ENCODE measurements at regions of chr9 and their contacts with region 1.

Region 1: GRCh38 chr9:136885950-136886578 is at the start of gene TRAF2:
- DNase-seq: peak; percentile 94
- ATAC-seq: peak; percentile 85
- H3K4me3 ChIP-seq: peak within 1 kb of the TSS; percentile 81 to 92 (median 85)
- H3K27ac ChIP-seq: peak within 1 kb of the TSS; percentile 74
- H3K4me1 ChIP-seq: peaks cover 57% of the 10 kb centered on the region
- H3K27me3 ChIP-seq: no peaks in the 10 kb centered on the region
- CTCF ChIP-seq: peak; percentile 26; the same call in 1 of the 2 replicates
- EP300 ChIP-seq: no peak
- POLR2A ChIP-seq: peak in 1 of 2 experiments; percentile 91; a peak in 2 of 4 replicates
- RAD21 ChIP-seq: peak; percentile 60
- total RNA-seq, gene TRAF2: 13.4 and 13.6 TPM in 2 replicates

Region 2: DNA sequence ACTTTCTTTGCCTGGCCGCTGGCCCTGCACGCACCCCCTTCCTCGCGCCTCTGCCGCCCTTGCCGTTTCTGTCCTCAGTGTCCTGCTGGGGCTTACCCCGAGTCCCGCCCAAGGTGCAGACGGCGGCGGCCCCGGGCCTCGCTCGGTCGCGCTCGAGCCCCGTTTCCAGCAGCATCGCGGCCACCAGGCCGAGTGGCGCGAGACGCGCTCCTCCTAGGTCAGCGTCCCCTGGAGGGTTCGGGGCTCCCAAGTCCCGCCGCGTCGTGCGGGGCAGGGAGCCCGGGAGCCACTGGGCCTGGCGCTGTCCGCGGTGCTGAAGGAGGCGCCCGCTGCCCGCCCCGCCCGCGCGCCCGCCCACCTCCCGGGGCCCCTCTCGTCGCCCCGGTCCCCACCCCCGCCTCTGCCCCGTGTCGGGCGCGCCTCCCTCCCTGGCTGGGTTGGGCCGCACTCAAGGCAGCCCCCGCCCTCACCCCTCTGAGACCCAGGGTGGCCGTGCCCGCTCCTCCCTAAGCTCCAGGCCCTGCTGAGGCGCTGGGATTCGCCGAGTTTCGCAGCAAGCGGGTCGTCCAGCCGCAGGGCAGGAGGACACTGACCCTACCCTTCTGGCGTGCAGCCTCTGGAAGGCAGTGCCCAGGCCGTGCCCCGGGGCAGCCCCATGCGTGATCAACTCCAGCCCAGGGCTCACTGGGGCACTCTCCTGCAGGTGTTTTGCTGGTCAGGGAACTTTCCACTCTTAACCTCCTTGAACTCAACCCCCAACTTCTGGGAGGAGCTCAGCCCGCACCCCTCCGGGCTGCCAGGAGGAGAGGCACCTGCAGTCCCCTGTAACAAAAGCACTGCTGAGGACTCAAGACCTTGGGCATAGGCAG is 681.0 kb before region 1 on chr9 and contains the start of gene LHX3:
- CTCF ChIA-PET with region 1: no interaction called
- POLR2A ChIA-PET with region 1: no interaction called
- in situ Hi-C with region 1: no loop called
- intact Hi-C with region 1: no loop called
- DNase-seq: no peak
- ATAC-seq: peak; percentile 58
- H3K4me3 ChIP-seq: no peak within 1 kb of the TSS
- H3K27ac ChIP-seq: no peak within 1 kb of the TSS
- H3K4me1 ChIP-seq: peaks cover 12% of the 10 kb centered on the region
- H3K27me3 ChIP-seq: peaks cover 7 to 36% of the 10 kb centered on the region in 2 experiments; a peak in 4 of 5 replicates
- CTCF ChIP-seq: no peak
- EP300 ChIP-seq: no peak
- POLR2A ChIP-seq: no peak
- RAD21 ChIP-seq: no peak
- total RNA-seq, gene LHX3: not detected in 2 replicates

Region 3: DNA sequence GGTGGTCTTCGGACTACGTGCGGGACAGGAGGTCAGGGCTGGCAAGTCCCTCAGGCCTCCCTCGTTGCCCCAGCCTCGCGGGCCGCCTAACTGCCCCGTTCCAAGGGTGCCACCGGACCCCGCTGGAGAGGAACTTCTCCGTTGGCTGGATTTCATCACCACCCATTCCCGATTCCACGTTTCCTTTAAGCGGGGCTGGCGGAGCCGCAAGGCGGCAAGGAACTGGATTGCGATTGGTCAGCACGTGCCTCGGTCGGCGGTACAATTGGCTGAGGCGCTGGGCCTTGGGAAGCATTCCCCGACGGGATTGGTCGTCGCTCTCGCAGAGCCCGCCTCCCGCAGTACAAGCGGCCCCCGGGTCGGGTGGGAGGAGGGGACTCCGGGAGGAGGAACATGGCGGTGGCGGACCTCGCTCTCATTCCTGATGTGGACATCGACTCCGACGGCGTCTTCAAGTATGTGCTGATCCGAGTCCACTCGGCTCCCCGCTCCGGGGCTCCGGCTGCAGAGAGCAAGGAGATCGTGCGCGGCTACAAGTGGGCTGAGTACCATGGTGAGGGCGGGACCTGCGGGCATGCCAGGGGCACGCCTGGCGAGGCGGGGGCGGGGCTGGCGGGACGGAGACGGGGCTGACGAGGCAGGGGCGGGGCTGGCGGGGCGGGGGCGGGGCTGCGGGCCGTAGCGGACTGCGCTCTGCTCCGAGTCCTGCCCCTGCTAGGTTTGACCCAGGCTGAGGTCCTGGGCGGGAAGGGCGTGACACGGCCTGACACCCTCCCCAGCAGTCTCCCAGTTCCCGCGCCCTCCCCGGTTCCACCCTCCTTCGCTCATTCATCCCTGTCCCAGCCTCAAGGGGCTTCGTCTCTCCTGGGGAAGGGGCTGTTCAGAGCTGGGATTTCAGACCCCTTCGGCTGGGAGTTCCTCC is 36.8 kb before region 1 on chr9 and contains the start of gene PHPT1:
- CTCF ChIA-PET with region 1: no interaction called
- POLR2A ChIA-PET with region 1: interaction called, 45 read pairs
- in situ Hi-C with region 1: no loop called
- intact Hi-C with region 1: loop called (anchors 5 kb)
- DNase-seq: peak; percentile 97
- ATAC-seq: peak; percentile 73
- H3K4me3 ChIP-seq: peak within 1 kb of the TSS; percentile 88 to 98 (median 91)
- H3K27ac ChIP-seq: peak within 1 kb of the TSS; percentile 91
- H3K4me1 ChIP-seq: peaks cover 25% of the 10 kb centered on the region
- H3K27me3 ChIP-seq: no peaks in the 10 kb centered on the region; a peak in 1 of 5 replicates
- CTCF ChIP-seq: no peak
- EP300 ChIP-seq: no peak
- POLR2A ChIP-seq: peak in 1 of 2 experiments; percentile 95; a peak in 2 of 4 replicates
- RAD21 ChIP-seq: peak; percentile 13; the same call in 1 of the 2 replicates
- total RNA-seq, gene PHPT1: 155 and 192 TPM in 2 replicates

Region 4: DNA sequence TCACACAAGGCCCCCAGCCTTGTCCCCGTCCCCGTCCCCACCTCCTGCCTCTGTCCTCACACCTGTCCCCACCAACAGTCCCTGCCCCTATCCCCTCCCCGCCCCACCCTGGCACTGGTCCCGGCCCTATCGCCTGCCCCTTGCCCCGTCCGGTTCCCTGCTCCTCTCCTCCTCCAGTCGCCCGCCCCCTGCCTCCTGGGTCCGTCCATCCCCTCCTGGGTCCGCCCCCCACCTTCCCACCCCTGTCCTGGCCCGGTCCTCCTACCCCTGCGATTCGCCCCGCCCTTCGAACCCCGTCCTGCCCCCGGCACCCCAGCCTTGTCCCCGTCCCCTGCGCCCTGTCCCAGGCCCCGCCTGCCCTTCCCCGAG is 20.3 kb before region 1 on chr9:
- CTCF ChIA-PET with region 1: no interaction called
- POLR2A ChIA-PET with region 1: interaction called, 23 read pairs
- in situ Hi-C with region 1: no loop called
- intact Hi-C with region 1: no loop called
- DNase-seq: no peak
- ATAC-seq: peak; percentile 35
- H3K4me3 ChIP-seq: peak overlapping the region; percentile 81 to 87 (median 87)
- H3K27ac ChIP-seq: peak overlapping the region; percentile 81
- H3K4me1 ChIP-seq: peaks cover 33% of the 10 kb centered on the region
- H3K27me3 ChIP-seq: no peaks in the 10 kb centered on the region
- CTCF ChIP-seq: no peak
- EP300 ChIP-seq: no peak
- POLR2A ChIP-seq: no peak
- RAD21 ChIP-seq: no peak

Region 5: DNA sequence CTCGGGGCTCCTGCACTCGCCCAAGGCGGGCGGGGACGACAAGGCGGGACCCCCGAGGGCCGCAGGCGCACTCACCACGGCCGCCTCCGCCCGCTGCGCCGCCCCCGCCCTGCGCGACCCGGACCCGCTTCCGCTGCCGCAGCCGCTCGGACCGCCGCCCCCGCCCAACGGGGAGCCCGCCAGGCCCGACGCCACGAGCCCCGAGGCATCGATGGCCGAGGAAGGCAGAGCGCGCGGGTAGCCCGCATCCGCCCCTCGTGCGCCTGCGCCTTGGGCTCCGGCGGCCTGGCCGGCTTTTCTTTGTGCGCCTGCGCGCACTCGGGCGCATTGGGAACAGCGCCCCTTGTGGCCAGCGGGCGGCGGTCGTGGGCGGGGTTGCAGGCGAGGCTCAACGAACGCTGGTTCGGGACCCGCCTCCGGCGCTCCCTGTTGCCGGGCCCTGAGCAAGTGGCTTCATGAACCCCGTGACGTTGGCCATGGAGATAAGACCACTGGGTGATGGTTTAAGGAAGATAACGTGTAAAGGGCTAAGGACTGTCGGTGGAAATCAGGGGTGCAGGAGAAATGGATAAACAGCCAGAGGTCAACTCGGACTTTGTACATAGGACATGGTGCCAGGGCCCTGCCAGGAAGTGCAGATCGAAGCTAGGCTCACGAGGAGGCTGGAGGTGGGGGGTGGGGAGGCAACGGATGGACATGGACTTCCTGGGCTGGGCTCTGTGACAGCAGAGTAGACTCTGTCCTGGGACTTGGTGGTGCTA is 58.6 kb after region 1 on chr9 and contains the starts of genes C8G and FBXW5:
- CTCF ChIA-PET with region 1: no interaction called
- POLR2A ChIA-PET with region 1: interaction called, 11 read pairs
- in situ Hi-C with region 1: no loop called
- intact Hi-C with region 1: loop called (anchors 5 kb)
- DNase-seq: peak; percentile 87
- ATAC-seq: peak; percentile 25
- H3K4me3 ChIP-seq: peak within 1 kb of the TSS; percentile 90 to 95 (median 91)
- H3K27ac ChIP-seq: peak within 1 kb of the TSS; percentile 75
- H3K4me1 ChIP-seq: peaks cover 44% of the 10 kb centered on the region
- H3K27me3 ChIP-seq: no peaks in the 10 kb centered on the region
- CTCF ChIP-seq: peak; percentile 92
- EP300 ChIP-seq: no peak; a peak in 1 of 4 replicates
- POLR2A ChIP-seq: no peak
- RAD21 ChIP-seq: peak; percentile 52; the same call in 1 of the 2 replicates
- total RNA-seq, gene C8G: 2.0 and 4.9 TPM in 2 replicates
- total RNA-seq, gene FBXW5: 47.4 and 60.4 TPM in 2 replicates

Measured in HepG2 (cell line).